Dorsolateral prefrontal cortex (tissue), 120 donors: ENCODE measurements at regions of chr13 and their contacts with region 1.

Region 1: DNA sequence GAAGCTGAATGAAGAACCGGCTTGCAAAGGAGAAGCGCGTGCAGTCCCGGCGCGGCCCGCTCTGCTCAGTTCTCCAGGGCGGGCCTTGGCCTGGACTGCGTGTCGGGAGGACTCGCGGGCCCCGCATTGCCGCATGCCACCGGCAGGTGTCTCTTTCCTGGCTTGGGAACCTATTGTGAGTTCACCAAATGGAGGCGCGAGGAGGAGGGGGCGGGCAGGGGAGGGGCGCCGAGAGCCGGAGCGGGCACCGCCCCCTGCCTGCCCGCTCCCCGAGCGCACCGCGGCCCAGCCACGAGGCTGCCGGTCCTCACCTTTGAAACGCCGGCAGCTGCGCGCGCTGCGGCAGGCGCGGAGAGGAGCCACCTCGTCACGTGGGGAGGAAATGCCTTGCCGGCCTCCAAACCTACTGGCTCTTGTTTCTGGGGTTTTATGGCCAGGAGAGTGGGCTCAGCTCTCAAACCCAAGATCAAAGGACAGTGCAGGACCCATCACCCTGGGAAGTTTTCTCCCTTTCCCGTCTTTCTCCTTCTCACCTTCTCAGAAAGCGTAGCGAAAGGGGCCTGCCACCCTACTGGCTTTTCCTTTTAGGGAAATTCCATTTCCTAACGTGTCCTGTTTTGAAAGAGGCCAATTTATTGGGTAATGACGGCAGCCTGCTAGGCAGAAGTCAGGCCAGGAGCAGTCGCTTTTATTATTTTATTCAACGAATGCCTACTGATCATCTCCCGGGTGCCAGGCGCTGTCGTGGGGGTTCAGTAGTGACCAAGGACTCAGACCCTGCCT is 13.8 kb upstream of the UBE2L5 start:
- DNase-seq: peak; percentile 85 to 92 (median 90)
- H3K4me3 ChIP-seq: peak overlapping the region; percentile 27 to 71 (median 56)
- H3K27ac ChIP-seq: peak overlapping the region; percentile 1 to 93 (median 82)
- H3K27me3 ChIP-seq: no peaks in the 10 kb centered on the region
- CTCF ChIP-seq: peak; percentile 44 to 91 (median 77)

Region 2: DNA sequence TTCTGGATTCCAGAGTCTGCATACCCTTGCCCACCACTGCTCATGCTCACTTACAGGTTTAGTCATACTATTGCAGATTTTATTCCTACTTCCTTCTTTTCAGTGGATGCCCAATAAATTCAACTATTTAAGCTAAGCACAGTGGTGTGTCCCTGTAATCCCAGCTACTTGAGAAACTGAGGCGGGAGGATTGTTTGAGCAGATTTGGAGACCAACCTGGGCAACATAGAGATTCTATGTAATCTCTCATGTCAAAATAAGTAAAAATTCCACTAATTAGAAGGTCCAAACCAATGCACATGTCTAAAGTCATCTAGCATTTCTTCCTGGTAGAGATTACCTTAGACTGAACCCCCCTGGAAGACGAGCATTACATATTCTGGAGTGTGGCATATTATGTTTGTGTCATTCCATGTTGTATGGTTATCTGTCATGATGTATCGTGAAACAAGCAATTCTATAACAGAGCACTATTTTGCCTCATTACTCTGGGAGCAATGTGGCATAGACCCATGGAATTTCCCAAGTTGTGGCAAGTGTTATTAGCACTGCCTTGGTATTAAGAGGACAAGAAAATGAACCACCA is 48.9 kb after region 1 on chr13:
- intact Hi-C with region 1: loop called (anchors 5 kb)
- DNase-seq: no peak
- H3K4me3 ChIP-seq: no peak overlapping the region
- H3K27ac ChIP-seq: peak overlapping the region in 3 of 59 donors; percentile 2 to 16 (median 3)
- H3K27me3 ChIP-seq: no peaks in the 10 kb centered on the region
- CTCF ChIP-seq: no peak

Region 3: DNA sequence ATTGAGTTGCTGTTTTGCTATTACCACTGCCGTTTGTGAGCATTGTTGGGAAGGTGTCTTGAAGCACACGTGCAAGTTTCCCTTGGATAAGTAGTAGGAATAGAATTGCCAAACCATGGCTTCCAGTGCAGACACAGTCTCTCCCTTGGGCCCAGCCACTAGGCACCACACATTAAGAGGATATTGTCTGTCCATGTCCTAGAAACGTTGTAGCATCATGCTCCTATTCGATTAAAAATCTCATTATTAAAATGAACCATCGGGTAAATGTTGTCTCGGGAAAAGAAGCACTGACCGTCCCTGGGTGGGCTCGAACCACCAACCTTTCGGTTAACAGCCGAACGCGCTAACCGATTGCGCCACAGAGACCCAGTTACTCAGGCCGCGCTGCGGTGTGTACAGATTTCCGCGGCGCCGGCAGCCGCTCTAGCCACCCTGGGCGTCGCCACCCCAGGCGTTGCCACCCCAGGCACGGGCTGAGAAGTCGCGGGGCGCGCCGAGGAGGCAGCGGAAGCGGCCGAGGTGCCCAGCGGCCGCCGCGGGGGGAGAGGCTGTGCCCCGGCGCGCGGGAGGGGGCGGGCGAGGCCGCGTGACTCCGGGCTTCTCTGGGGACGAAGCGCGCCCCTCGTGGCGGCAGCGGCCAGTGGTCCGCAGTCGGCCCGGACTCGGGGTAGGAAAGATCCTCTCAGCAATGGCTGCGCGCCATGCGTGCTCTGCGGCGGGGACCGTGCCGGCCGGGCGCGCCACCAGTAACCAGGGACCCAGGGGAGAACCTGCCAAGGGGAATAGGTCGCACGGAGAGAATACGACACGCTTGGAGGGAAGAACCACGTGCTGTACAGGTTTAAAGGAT is 265.4 kb after region 1 on chr13:
- intact Hi-C with region 1: loop called in 1 of 2 experiments (anchors 5 kb)
- DNase-seq: peak; percentile 74 to 90 (median 86)
- H3K4me3 ChIP-seq: peak overlapping the region; percentile 33 to 77 (median 61)
- H3K27ac ChIP-seq: peak overlapping the region; percentile 27 to 91 (median 83)
- H3K27me3 ChIP-seq: no peaks in the 10 kb centered on the region
- CTCF ChIP-seq: peak; percentile 32 to 94 (median 76)